Sigmoid colon (tissue), 7 donors: ENCODE measurements at regions of chr17 and their contacts with region 1.

Region 1: DNA sequence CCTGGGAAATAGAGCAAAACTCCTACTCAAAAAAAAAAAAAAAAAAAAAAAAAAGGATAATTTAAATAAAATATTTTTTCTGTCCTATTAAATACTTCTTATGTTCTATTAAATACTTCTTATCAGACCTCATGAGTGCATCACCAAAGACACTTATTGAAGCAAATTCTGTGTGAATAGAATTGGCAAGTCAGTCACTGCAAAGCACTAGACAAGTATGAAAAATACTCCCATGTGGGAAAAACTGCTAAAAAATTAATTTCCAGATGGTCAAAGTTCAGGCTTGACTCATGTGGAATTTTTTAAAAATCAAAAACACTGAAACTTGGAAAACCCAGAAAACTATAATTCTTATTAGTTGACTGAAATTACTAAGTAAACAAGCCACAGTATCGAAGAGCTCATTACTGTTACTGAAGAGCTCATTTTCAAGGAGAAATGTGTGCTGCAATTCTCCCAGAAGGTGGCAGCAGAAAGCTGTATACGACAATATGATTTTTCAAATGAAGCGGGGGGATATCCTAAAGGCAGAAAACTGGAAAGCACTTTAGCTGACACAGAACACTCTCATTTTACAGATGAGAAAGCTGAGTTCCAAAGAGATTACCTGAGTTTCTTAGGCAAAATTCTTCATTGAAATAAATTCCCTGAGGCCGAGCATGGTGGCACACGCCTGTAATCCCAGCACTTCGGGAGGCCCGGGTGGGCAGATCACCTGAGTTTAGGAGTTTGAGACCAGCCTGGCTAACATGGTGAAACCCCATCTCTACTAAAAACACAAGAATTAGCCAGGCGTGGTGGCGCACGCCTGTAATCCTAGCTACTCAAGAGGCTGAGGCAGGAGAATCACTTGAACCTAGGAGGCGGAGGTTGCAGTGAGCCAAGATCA is 15.9 kb upstream of the FBXO47 start:
- DNase-seq: peak; percentile 75
- H3K4me3 ChIP-seq: no peak overlapping the region
- H3K27ac ChIP-seq: no peak overlapping the region
- H3K4me1 ChIP-seq: peaks cover 0 to 13% (median 3%) of the 10 kb centered on the region in 4 donors
- H3K27me3 ChIP-seq: no peaks in the 10 kb centered on the region
- CTCF ChIP-seq: peak; percentile 45 to 73 (median 70)
- EP300 ChIP-seq: no peak
- POLR2A ChIP-seq: no peak

Region 2: DNA sequence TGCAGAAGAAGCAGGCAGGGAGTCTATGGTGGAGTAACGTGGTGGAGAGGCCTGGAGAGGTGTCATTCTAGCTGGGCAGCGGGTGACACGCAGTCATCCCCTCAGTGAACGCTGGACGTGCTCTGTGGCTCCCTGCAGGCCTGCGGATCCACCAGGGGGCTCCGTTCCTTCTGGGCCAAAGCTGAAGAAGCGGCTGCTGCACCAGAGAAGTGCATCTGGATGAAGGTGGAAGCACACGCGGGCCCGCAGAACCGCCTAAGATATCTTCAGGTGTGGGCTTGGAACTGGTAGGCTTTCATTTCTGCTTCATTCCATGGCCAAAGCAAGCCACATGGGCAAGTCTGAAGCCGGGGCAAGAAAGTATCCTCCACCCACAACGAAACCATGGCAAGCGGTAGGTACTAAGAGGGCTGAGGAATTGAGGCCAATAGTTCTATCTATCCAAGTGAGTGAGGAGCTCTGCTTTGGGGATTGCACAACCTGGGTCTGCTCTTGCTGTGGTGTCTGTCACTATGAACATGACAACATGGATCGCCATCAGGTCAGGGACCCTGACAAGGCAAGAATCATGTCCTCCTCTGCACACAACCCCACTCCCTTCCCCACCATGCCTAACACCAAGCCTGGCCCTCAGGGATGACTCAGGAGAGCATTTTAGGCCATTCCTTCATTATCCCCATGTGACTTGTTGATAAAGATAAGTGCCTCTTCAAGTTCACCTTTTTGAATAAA is 63.0 kb after region 1 on chr17:
- intact Hi-C with region 1: no loop called
- DNase-seq: no peak
- H3K4me3 ChIP-seq: no peak overlapping the region
- H3K27ac ChIP-seq: no peak overlapping the region
- H3K4me1 ChIP-seq: no peaks in the 10 kb centered on the region
- H3K27me3 ChIP-seq: no peaks in the 10 kb centered on the region
- CTCF ChIP-seq: no peak
- EP300 ChIP-seq: no peak
- POLR2A ChIP-seq: no peak

Region 3: DNA sequence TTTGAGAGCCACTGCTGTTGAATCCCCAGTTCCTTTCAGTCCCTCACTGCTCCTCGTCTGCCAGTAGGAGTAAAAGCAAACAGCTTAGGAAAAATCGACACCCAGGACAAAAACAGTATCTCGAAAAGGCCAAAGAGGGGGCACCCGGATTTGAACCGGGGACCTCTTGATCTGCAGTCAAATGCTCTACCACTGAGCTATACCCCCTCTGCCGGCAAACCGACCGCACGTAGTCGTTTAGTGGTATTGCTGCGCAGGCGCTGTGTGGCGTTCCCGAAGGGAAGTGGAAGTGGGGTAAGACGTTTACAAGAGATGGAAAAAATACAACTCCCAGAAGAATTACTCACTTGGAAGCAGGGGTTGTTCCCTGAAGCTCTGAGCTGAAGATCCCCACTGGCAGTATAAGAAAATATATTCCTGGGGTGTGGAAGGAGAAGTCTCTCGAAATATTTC is 170.5 kb after region 1 on chr17:
- intact Hi-C with region 1: loop called (anchors 1 kb)
- DNase-seq: peak; percentile 97
- H3K4me3 ChIP-seq: peak overlapping the region; percentile 64 to 88 (median 74)
- H3K27ac ChIP-seq: peak overlapping the region; percentile 89 to 96 (median 90)
- H3K4me1 ChIP-seq: peaks cover 0 to 28% (median 24%) of the 10 kb centered on the region in 4 donors
- H3K27me3 ChIP-seq: peaks cover 14 to 21% (median 15%) of the 10 kb centered on the region in 3 donors
- CTCF ChIP-seq: peak in 2 of 4 experiments; percentile 17 to 24
- EP300 ChIP-seq: no peak
- POLR2A ChIP-seq: no peak

Region 4: DNA sequence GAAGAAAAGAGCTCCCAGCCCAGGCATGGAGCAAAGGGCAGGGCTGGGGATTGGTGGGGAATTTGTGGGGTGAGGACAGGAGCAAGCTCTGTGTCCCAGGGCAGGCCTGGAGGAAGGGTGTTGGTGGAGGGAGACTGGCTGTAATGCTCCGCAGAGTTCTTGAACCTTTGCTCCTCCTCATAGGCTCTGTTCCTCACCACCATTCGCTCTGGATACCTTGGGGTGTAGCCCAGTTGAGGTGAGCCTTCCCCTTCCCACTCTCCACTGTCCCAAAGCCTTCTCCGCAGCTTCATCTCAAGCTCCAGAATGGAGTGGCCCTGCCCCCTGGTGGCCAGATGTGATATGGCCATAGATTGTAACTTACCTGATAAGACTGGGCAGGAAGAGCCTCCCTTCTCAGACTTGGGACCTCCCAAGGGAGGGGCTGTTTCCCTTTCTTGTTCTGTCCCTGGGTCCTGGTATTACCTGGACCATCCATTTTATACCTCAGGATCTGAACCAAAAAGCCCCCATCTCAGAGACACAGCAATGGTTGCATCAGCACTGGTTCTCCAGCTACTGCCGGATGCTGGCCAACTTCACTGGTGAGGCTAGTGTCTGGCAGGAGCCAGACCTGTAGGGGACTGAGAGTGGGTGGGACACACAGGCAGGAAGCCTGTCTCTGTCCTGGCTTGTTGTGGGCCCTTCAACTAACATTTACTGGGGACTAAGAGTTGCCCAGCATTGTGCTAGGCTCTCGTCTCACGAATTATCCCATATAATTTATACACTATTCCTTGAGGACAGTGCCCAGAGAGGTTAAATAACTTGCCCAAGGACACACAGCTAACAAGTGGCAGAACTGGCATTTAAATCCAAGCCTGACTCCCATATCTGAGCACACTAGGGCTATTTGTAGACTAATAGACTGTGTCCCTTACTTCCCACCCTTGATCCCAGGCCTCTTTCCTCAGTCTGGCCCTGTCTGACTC is 261.8 kb after region 1 on chr17:
- intact Hi-C with region 1: loop called (anchors 5 kb)
- DNase-seq: peak; percentile 92
- H3K4me3 ChIP-seq: no peak overlapping the region
- H3K27ac ChIP-seq: no peak overlapping the region
- H3K4me1 ChIP-seq: no peaks in the 10 kb centered on the region
- H3K27me3 ChIP-seq: peaks cover 0 to 12% (median 0%) of the 10 kb centered on the region in 3 donors
- CTCF ChIP-seq: peak; percentile 78 to 97 (median 90)
- EP300 ChIP-seq: no peak
- POLR2A ChIP-seq: no peak